Activated naive CD4-positive, alpha-beta T cell treated with anti-CD3 and anti-CD28 coated beads for 36 hours (primary cell): ENCODE measurements at regions of chr6 and their contacts with region 1.

Region 1: GRCh38 chr6:135438907-135439535 is 58.5 kb downstream of the AHI1 start:
- DNase-seq: no peak
- H3K4me3 Mint-ChIP-seq: peak overlapping the region; percentile 7
- H3K27ac Mint-ChIP-seq: no peak overlapping the region
- H3K4me1 Mint-ChIP-seq: peaks cover 22% of the 10 kb centered on the region
- H3K27me3 Mint-ChIP-seq: no peaks in the 10 kb centered on the region

Region 2: GRCh38 chr6:134882426-134883038 is 556.5 kb before region 1 on chr6:
- CTCF ChIA-PET with region 1: no interaction called
- intact Hi-C with region 1: loop called (anchors 1 kb)
- DNase-seq: peak; percentile 80
- H3K4me3 Mint-ChIP-seq: no peak overlapping the region
- H3K27ac Mint-ChIP-seq: no peak overlapping the region
- H3K4me1 Mint-ChIP-seq: no peaks in the 10 kb centered on the region
- H3K27me3 Mint-ChIP-seq: peaks cover 10% of the 10 kb centered on the region

Region 3: GRCh38 chr6:135002229-135002844 is 436.7 kb before region 1 on chr6:
- CTCF ChIA-PET with region 1: no interaction called
- intact Hi-C with region 1: loop called (anchors 5 kb)
- DNase-seq: no peak
- H3K4me3 Mint-ChIP-seq: no peak overlapping the region
- H3K27ac Mint-ChIP-seq: no peak overlapping the region
- H3K4me1 Mint-ChIP-seq: peaks cover 19% of the 10 kb centered on the region
- H3K27me3 Mint-ChIP-seq: no peaks in the 10 kb centered on the region

Region 4: DNA sequence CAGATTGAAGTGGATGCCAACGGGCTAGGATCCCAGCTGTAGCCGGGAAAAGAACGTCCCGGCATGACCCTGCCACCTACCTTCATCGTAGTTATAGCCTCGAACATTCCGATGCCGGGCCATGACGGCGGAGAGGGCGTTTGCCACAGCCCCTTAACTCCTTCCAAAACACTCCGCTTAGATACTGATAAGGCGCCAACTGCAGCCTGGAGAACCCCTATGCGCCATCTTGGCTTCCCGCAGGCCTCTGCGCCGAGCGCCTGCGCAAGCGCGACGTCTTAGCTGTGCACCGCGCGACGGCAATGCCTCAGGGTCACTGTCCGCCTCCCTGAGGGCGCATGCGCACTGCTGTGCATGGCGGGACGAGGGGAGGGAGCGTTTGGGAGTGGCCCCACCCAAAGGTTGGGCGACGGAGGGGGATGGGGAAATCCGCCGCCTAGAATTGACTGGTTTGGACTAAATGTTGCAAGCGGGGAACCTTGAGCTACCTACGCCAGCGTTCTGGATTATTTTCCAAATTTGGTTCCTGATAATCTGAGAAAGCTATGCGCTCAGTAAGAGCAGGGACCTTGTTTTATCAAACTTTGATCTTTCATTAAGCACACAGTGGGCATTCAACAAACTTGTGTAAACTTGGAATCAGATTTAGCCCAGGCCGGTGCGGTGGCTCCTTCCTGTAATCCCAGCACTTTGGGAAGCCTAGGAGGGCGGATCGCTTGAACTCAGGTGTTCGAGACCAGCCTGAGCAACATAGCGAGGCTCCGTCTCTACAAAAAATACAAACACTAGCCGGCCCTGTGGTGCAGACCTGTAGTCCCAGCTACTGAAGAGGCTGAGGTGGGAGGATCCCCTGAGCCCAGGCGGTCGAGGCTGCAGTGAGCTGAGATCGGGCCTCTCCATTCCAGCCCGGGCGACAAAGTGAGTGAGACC is 384.2 kb before region 1 on chr6 and contains the start of gene HBS1L:
- CTCF ChIA-PET with region 1: no interaction called
- intact Hi-C with region 1: loop called (anchors 5 kb)
- DNase-seq: peak; percentile 98
- H3K4me3 Mint-ChIP-seq: peak within 1 kb of the TSS; percentile 90
- H3K27ac Mint-ChIP-seq: peak within 1 kb of the TSS; percentile 96
- H3K4me1 Mint-ChIP-seq: peaks cover 23% of the 10 kb centered on the region
- H3K27me3 Mint-ChIP-seq: no peaks in the 10 kb centered on the region
- total RNA-seq, gene HBS1L: 150 to 153 TPM

Region 5: GRCh38 chr6:135145063-135145800 is 293.8 kb before region 1 on chr6:
- CTCF ChIA-PET with region 1: interaction called, 3 read pairs
- intact Hi-C with region 1: loop called (anchors 1 kb)
- DNase-seq: no peak
- H3K4me3 Mint-ChIP-seq: no peak overlapping the region
- H3K27ac Mint-ChIP-seq: peak overlapping the region; percentile 76
- H3K4me1 Mint-ChIP-seq: peaks cover 51% of the 10 kb centered on the region
- H3K27me3 Mint-ChIP-seq: no peaks in the 10 kb centered on the region

Region 6: GRCh38 chr6:135212020-135212806 is 226.8 kb before region 1 on chr6:
- CTCF ChIA-PET with region 1: no interaction called
- intact Hi-C with region 1: loop called (anchors 5 kb)
- DNase-seq: peak; percentile 62
- H3K4me3 Mint-ChIP-seq: no peak overlapping the region
- H3K27ac Mint-ChIP-seq: no peak overlapping the region
- H3K4me1 Mint-ChIP-seq: peaks cover 35% of the 10 kb centered on the region
- H3K27me3 Mint-ChIP-seq: no peaks in the 10 kb centered on the region

Region 7: GRCh38 chr6:135739288-135739687 is 300.3 kb after region 1 on chr6:
- CTCF ChIA-PET with region 1: no interaction called
- intact Hi-C with region 1: no loop called
- DNase-seq: no peak
- H3K4me3 Mint-ChIP-seq: no peak overlapping the region
- H3K27ac Mint-ChIP-seq: no peak overlapping the region
- H3K4me1 Mint-ChIP-seq: no peaks in the 10 kb centered on the region
- H3K27me3 Mint-ChIP-seq: no peaks in the 10 kb centered on the region